Activated T-helper 2 cell treated with anti-CD3 and anti-CD28 coated beads, Interferon-gamma antibody, Interleukin-2, Interleukin-4, amounts not matched to agents 10 μg/mL and 5 μg/mL and 100 μg/mL, durations not matched to agents 14 hours and 24 hours and 36 hours (primary cell): ENCODE measurements at regions of chrX and their contacts with region 1.

Region 1: DNA sequence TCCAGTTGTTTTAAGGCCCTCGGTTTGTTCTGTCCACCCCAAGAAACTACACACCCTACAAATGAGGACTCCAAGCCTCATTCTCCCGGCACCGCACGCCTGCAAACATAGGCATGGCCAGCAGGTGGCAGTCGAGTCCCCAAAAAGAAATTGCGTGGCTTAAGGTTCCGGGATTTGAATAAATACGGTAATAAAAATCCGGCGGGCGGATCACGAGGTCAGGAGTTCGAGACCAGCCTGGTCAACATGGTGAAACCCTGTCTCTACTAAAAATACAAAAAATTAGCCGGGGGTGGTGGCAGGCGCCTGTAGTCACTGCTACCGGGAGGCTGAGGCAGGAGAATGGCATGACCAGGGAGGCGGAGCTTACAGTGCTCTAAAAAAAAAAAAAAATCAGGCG is 21.8 kb upstream of the CSF2RA start:
- DNase-seq: peak; percentile 76
- H3K4me3 Mint-ChIP-seq: no peak overlapping the region
- H3K27ac Mint-ChIP-seq: peak overlapping the region; percentile 46
- H3K4me1 Mint-ChIP-seq: peaks cover 25% of the 10 kb centered on the region
- H3K27me3 Mint-ChIP-seq: peaks cover 4% of the 10 kb centered on the region

Region 2: GRCh38 chrX:1165535-1166196 is 81.2 kb before region 1 on chrX:
- intact Hi-C with region 1: loop called (anchors 5 kb)
- DNase-seq: no peak
- H3K4me3 Mint-ChIP-seq: peak overlapping the region; percentile 8
- H3K27ac Mint-ChIP-seq: no peak overlapping the region
- H3K4me1 Mint-ChIP-seq: peaks cover 12% of the 10 kb centered on the region
- H3K27me3 Mint-ChIP-seq: peaks cover 12% of the 10 kb centered on the region

Region 3: DNA sequence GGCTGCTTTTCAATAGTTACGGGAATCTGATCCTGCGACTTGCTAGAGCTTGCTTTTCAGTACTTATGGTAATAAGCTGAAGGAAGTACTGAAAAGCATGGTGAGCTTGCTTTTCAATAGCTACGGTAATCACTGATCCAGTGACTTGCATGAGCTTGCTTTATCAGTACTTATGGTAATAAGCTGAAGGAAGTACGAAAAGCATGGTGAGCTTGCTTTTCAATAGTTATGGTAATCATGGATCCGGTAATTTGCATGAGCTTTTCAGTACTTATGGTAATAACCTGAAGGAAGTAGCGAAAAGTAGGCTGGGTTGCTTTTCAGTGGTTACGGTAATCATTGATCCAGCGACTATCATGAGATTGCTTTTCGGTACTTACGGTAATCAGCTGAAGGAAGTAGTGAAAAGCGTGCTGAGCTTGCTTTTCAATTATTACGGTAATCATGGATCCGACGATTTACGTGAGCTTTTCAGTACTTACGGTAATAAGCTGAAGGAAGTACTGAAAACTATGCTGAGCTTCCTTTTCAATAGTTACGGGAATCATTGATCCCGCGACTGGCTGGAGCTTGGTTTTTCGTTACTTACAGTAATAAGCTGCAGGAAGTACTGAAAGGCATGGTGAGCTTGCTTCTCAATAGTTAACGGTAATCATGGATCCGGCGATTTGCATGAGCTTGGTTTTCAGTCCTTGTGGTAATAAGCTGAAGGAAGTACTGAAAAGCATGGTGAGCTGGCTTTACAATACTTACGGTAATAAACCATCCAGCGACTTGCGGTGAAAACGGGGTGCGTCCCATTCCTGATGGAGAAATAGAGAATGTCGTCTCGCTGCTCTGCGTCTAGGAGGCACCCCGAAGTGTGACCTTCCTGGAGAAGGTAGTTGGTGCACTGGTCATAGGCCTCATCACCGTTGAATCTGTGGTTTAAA is 40.9 kb before region 1 on chrX:
- intact Hi-C with region 1: loop called (anchors 1 kb)
- DNase-seq: peak; percentile 29
- H3K4me3 Mint-ChIP-seq: peak overlapping the region; percentile 43
- H3K27ac Mint-ChIP-seq: no peak overlapping the region
- H3K4me1 Mint-ChIP-seq: peaks cover 21% of the 10 kb centered on the region
- H3K27me3 Mint-ChIP-seq: no peaks in the 10 kb centered on the region

Region 4: GRCh38 chrX:1264556-1264955 is 17.7 kb after region 1 on chrX:
- intact Hi-C with region 1: no loop called
- DNase-seq: no peak
- H3K4me3 Mint-ChIP-seq: no peak overlapping the region
- H3K27ac Mint-ChIP-seq: no peak overlapping the region
- H3K4me1 Mint-ChIP-seq: peaks cover 11% of the 10 kb centered on the region
- H3K27me3 Mint-ChIP-seq: no peaks in the 10 kb centered on the region

Region 5: GRCh38 chrX:1323315-1323714 is 76.5 kb after region 1 on chrX:
- intact Hi-C with region 1: loop called (anchors 1 kb)
- DNase-seq: peak; percentile 60
- H3K4me3 Mint-ChIP-seq: no peak overlapping the region
- H3K27ac Mint-ChIP-seq: peak overlapping the region; percentile 70
- H3K4me1 Mint-ChIP-seq: peaks cover 20% of the 10 kb centered on the region
- H3K27me3 Mint-ChIP-seq: peaks cover 2% of the 10 kb centered on the region

Region 6: GRCh38 chrX:1391707-1392375 is 145.0 kb after region 1 on chrX and contains the start of gene SLC25A6:
- intact Hi-C with region 1: loop called (anchors 5 kb)
- DNase-seq: peak; percentile 99
- H3K4me3 Mint-ChIP-seq: peak within 1 kb of the TSS; percentile 95
- H3K27ac Mint-ChIP-seq: peak within 1 kb of the TSS; percentile 95
- H3K4me1 Mint-ChIP-seq: peaks cover 26% of the 10 kb centered on the region
- H3K27me3 Mint-ChIP-seq: no peaks in the 10 kb centered on the region
- total RNA-seq, gene SLC25A6: 318 and 325 TPM in 2 replicates

Region 7: DNA sequence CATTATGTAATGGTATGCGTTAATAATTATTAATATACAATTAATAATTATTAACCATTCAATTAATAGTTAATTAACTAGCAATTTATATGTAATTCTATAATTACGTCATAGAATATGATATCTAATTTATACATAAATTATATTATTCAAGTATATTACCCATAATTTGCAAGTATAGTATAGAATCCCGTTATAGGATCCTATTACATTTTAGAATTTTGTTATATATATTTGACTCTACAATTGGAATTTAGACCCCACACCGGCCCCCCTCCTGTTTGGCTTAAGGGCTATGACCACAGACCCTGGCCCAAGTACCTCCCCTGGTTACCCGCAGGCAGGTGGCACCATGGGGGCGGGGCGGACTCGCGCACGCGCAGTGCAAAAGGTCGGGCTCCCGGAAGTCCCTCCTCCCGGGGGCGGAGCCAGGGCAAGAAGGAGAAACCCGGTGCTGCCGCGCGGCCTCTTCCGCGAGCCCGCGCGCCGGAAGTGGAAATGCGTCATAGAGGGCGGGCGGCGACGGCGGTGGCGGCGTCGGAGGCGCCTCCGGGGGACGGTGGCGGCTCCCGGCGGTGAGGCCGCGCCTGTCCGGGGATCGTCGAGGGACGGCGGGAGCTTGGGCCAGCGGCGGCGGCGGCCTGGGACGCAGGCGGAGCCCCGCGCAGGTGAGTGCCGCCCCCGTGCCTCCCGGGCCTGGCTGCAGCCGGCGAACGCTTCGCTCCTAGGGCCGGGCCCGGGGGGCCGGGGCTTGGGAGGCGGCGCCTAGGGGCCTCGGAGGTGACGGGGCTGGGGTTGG is 344.5 kb after region 1 on chrX and contains the start of gene AKAP17A:
- intact Hi-C with region 1: loop called (anchors 5 kb)
- DNase-seq: peak; percentile 98
- H3K4me3 Mint-ChIP-seq: peak within 1 kb of the TSS; percentile 93
- H3K27ac Mint-ChIP-seq: peak within 1 kb of the TSS; percentile 92
- H3K4me1 Mint-ChIP-seq: peaks cover 24% of the 10 kb centered on the region
- H3K27me3 Mint-ChIP-seq: no peaks in the 10 kb centered on the region
- total RNA-seq, gene AKAP17A: 67.4 and 67.6 TPM in 2 replicates